Activated T-helper 1 cell treated with anti-CD3 and anti-CD28 coated beads, Interleukin-12 subunit alpha, Interleukin-12 subunit beta, Interleukin-2, Interleukin-4 antibody, amounts not matched to agents 30 ng/mL and 10 ng/mL and 1 ng/mL, durations not matched to agents 14 hours and 24 hours and 36 hours (primary cell): ENCODE measurements at regions of chr6 and their contacts with region 1.

Region 1: GRCh38 chr6:134822920-134823709 is 126.8 kb downstream of the ALDH8A1 start:
- DNase-seq: peak; percentile 1
- H3K4me3 Mint-ChIP-seq: no peak overlapping the region
- H3K27ac Mint-ChIP-seq: no peak overlapping the region
- H3K4me1 Mint-ChIP-seq: no peaks in the 10 kb centered on the region
- H3K27me3 Mint-ChIP-seq: peaks cover 2% of the 10 kb centered on the region

Region 2: GRCh38 chr6:134111062-134111677 is 711.9 kb before region 1 on chr6:
- intact Hi-C with region 1: loop called (anchors 1 kb)
- DNase-seq: peak; percentile 24
- H3K4me3 Mint-ChIP-seq: no peak overlapping the region
- H3K27ac Mint-ChIP-seq: no peak overlapping the region
- H3K4me1 Mint-ChIP-seq: peaks cover 12% of the 10 kb centered on the region
- H3K27me3 Mint-ChIP-seq: peaks cover 9% of the 10 kb centered on the region

Region 3: GRCh38 chr6:134161036-134161435 is 662.1 kb before region 1 on chr6:
- intact Hi-C with region 1: loop called (anchors 1 kb)
- DNase-seq: no peak
- H3K4me3 Mint-ChIP-seq: no peak overlapping the region
- H3K27ac Mint-ChIP-seq: no peak overlapping the region
- H3K4me1 Mint-ChIP-seq: peaks cover 5% of the 10 kb centered on the region
- H3K27me3 Mint-ChIP-seq: no peaks in the 10 kb centered on the region

Region 4: DNA sequence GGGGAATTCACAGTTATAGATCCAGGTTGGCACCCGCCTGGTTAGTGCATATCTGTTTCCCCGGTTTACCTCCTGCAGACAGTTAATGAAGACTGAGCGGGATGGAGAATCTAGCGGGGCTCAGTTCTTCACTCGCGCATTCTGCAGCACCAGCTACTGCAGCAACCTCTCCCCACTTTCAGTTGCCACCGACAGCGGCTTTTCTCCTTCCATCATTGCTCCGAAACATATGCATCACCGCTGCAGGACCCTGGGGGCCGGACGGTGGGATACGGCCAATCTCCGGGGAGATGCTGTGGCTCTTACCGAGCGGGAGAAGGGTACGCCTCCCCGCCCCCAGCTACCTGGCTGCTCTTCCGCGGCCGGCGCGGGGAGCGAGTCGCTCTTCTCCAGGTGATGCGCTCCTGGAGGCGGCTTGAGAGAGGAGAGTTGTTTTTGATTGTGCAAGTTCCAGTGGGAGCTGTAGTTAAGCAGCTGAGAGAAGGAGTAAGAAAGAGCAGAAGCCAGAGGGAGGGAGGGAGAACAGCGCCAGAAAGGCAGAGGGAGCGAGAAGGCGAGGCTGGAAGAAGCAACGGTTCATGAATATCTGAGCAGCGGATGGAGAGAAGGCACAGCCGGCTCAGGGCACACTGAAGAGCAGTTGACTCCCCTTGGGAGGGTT is 505.5 kb before region 1 on chr6 and contains the start of gene SGK1:
- intact Hi-C with region 1: loop called (anchors 10 kb)
- DNase-seq: peak; percentile 3
- H3K4me3 Mint-ChIP-seq: peak within 1 kb of the TSS; percentile 91
- H3K27ac Mint-ChIP-seq: peak within 1 kb of the TSS; percentile 57
- H3K4me1 Mint-ChIP-seq: peaks cover 39% of the 10 kb centered on the region
- H3K27me3 Mint-ChIP-seq: peaks cover 16% of the 10 kb centered on the region
- total RNA-seq, gene SGK1: 48.7 and 50.2 TPM in 2 replicates

Region 5: DNA sequence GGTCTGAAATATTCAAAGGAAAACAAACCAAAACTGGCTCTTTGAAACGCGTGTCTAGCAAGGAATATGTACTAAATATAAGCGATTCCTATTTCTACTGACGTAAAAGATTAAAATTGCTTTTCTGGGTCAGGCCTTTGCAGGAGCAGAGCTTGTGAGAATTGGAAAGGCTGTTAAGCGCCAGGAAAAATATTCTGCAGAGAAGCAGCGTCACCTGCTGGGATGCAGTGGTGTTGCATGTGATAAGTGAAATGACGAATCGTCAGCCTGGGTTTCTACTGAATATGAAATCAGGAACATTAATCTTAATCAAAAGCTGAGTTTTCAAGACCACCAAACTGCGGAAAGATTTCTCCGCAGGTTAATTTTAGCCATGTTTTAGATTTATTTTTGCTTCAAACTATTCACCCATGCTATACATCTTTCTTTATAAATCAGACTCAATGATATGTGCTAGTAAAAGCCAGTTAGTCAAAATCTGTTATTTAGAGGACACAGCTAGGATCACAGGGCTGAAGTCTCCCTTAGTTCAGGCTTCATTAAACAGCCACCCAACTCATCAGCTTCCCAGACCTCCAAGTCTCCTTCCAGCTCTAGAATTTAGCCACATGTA is 59.4 kb after region 1 on chr6:
- intact Hi-C with region 1: loop called (anchors 1 kb)
- DNase-seq: peak; percentile 31
- H3K4me3 Mint-ChIP-seq: no peak overlapping the region
- H3K27ac Mint-ChIP-seq: no peak overlapping the region
- H3K4me1 Mint-ChIP-seq: no peaks in the 10 kb centered on the region
- H3K27me3 Mint-ChIP-seq: peaks cover 24% of the 10 kb centered on the region